GM23248 (cell line): ENCODE measurements at regions of chr9 and their contacts with region 1.

Region 1: DNA sequence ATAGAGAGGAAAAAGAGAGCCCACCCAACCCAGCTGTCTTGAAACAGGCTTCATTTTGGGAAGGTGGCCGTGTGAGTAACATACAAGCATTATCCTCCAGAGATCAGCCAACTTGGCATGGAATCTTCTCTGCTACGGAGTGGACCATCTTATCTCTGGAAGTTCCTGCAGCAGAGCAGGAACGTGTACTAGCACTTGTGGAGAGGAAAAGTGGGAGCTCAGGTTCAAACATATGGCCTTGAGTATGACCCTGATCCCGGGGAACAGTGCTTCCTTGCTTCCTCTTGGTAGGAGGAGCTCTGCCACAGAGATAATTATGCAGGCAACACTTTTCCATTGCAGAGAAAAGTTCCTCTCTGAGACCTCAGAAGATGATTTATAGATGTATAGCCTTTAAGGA is 490.4 kb upstream of the ACO1 start:
- DNase-seq: no peak
- H3K4me3 ChIP-seq: no peak overlapping the region
- H3K27ac ChIP-seq: no peak overlapping the region
- H3K4me1 ChIP-seq: no peaks in the 10 kb centered on the region
- H3K27me3 ChIP-seq: no peaks in the 10 kb centered on the region

Region 2: GRCh38 chr9:31799953-31800609 is 93.9 kb before region 1 on chr9:
- in situ Hi-C with region 1: loop called (anchors 25 kb)
- DNase-seq: peak; percentile 10
- H3K4me3 ChIP-seq: no peak overlapping the region
- H3K27ac ChIP-seq: no peak overlapping the region
- H3K4me1 ChIP-seq: no peaks in the 10 kb centered on the region
- H3K27me3 ChIP-seq: no peaks in the 10 kb centered on the region

Region 3: DNA sequence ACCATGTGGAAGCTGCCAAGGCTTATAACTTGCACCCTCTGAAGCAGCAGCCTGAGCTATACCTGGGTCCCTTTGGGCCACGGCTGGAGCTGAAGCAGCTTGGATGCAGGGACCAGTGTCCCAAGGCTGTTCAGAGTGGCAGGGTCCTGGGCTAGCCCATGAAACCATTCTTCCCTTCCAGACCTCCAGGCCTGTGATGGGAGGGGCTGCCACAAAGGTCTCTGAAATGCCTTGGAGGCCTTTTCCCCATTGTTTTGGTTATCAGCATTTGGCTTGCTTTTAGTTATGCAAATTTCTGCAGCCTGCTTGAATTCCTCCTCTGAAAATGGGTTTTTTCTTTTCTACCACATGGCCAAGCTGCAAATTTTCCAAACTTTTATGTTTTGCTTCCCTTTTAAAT is 56.7 kb after region 1 on chr9:
- in situ Hi-C with region 1: loop called (anchors 10 kb)
- DNase-seq: no peak
- H3K4me3 ChIP-seq: no peak overlapping the region
- H3K27ac ChIP-seq: no peak overlapping the region
- H3K4me1 ChIP-seq: no peaks in the 10 kb centered on the region
- H3K27me3 ChIP-seq: no peaks in the 10 kb centered on the region